Activated CD8-positive, alpha-beta T cell treated with anti-CD3 and anti-CD28 coated beads, Interleukin-2, amount 10 ng/mL, durations not matched to agents 7 days and 5 days (primary cell): ENCODE measurements at regions of chr2 and their contacts with region 1.

Region 1: GRCh38 chr2:186641807-186642321 is 52.0 kb upstream of the FAM171B start:
- DNase-seq: peak; percentile 54
- ATAC-seq: peak; percentile 57
- H3K4me3 Mint-ChIP-seq: no peak overlapping the region
- H3K27ac Mint-ChIP-seq: no peak overlapping the region
- H3K4me1 Mint-ChIP-seq: peaks cover 11% of the 10 kb centered on the region
- H3K27me3 Mint-ChIP-seq: no peaks in the 10 kb centered on the region

Region 2: GRCh38 chr2:186493564-186494085 is 148.2 kb before region 1 on chr2:
- CTCF ChIA-PET with region 1: interaction called, 12 read pairs
- POLR2A ChIA-PET with region 1: no interaction called
- DNase-seq: no peak
- ATAC-seq: no peak
- H3K4me3 Mint-ChIP-seq: no peak overlapping the region
- H3K27ac Mint-ChIP-seq: no peak overlapping the region
- H3K4me1 Mint-ChIP-seq: peaks cover 48% of the 10 kb centered on the region
- H3K27me3 Mint-ChIP-seq: no peaks in the 10 kb centered on the region

Region 3: GRCh38 chr2:186503848-186504606 is 137.8 kb before region 1 on chr2:
- CTCF ChIA-PET with region 1: interaction called, 117 read pairs
- POLR2A ChIA-PET with region 1: interaction called, 3 read pairs
- DNase-seq: no peak
- ATAC-seq: peak; percentile 36
- H3K4me3 Mint-ChIP-seq: no peak overlapping the region
- H3K27ac Mint-ChIP-seq: peak overlapping the region; percentile 37
- H3K4me1 Mint-ChIP-seq: peaks cover 6% of the 10 kb centered on the region
- H3K27me3 Mint-ChIP-seq: no peaks in the 10 kb centered on the region

Region 4: GRCh38 chr2:186589612-186590349 is 52.1 kb before region 1 on chr2 and contains the start of gene ITGAV:
- CTCF ChIA-PET with region 1: interaction called, 13 read pairs
- POLR2A ChIA-PET with region 1: interaction called, 6 read pairs
- DNase-seq: peak; percentile 89
- ATAC-seq: peak; percentile 97
- H3K4me3 Mint-ChIP-seq: peak within 1 kb of the TSS; percentile 79
- H3K27ac Mint-ChIP-seq: peak within 1 kb of the TSS; percentile 82
- H3K4me1 Mint-ChIP-seq: peaks cover 23% of the 10 kb centered on the region
- H3K27me3 Mint-ChIP-seq: peaks cover 10% of the 10 kb centered on the region
- total RNA-seq, gene ITGAV: 4.9 to 5.6 TPM

Region 5: GRCh38 chr2:186629250-186629996 is 12.4 kb before region 1 on chr2:
- CTCF ChIA-PET with region 1: interaction called, 17 read pairs
- POLR2A ChIA-PET with region 1: no interaction called
- DNase-seq: no peak
- ATAC-seq: no peak
- H3K4me3 Mint-ChIP-seq: no peak overlapping the region
- H3K27ac Mint-ChIP-seq: no peak overlapping the region
- H3K4me1 Mint-ChIP-seq: no peaks in the 10 kb centered on the region
- H3K27me3 Mint-ChIP-seq: no peaks in the 10 kb centered on the region

Region 6: DNA sequence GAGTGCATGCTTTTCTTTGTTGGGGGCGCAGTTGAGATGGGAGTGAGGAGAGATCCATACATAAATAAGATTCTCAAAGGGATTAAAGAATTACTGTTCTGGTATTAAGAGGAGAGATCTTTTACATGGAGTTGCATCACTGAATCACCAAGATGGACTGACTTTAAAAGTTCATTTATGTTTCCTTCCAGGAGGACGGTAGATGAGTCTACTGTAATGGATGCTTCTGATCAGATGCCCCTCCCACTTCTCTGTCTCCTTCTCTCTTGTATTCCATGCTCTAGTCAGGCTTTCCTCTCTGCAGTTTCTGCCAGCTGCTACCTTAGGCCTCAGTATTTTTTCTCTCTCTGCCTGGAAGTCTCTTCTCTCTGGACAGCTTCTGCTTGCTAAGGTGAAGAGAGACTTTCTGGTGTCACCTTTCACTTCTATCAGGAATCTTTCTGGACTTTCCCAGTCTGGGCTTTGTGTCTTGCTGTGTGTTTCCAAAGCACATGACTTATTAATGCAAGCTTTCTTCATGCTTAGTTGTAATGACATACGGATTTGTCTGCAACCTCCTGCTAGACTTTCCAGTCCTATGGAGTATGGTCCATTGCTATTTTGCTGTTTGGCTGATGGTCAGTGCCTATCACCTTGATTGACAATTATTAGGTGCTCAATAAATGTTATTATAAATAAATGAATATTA is 75.6 kb after region 1 on chr2:
- CTCF ChIA-PET with region 1: no interaction called
- POLR2A ChIA-PET with region 1: no interaction called
- DNase-seq: no peak
- ATAC-seq: no peak
- H3K4me3 Mint-ChIP-seq: no peak overlapping the region
- H3K27ac Mint-ChIP-seq: no peak overlapping the region
- H3K4me1 Mint-ChIP-seq: no peaks in the 10 kb centered on the region
- H3K27me3 Mint-ChIP-seq: peaks cover 4% of the 10 kb centered on the region

Region 7: GRCh38 chr2:186806591-186806990 is 164.7 kb after region 1 on chr2:
- CTCF ChIA-PET with region 1: no interaction called
- POLR2A ChIA-PET with region 1: no interaction called
- DNase-seq: no peak
- ATAC-seq: no peak
- H3K4me3 Mint-ChIP-seq: no peak overlapping the region
- H3K27ac Mint-ChIP-seq: no peak overlapping the region
- H3K4me1 Mint-ChIP-seq: no peaks in the 10 kb centered on the region
- H3K27me3 Mint-ChIP-seq: no peaks in the 10 kb centered on the region